Dendritic cell treated with granulocyte-macrophage colony-stimulating factor and Interleukin-4, amounts not matched to agents 40 ng/mL and 50 ng/mL, for 4 days (primary cell): ENCODE measurements at regions of chr10 and their contacts with region 1.

Region 1: DNA sequence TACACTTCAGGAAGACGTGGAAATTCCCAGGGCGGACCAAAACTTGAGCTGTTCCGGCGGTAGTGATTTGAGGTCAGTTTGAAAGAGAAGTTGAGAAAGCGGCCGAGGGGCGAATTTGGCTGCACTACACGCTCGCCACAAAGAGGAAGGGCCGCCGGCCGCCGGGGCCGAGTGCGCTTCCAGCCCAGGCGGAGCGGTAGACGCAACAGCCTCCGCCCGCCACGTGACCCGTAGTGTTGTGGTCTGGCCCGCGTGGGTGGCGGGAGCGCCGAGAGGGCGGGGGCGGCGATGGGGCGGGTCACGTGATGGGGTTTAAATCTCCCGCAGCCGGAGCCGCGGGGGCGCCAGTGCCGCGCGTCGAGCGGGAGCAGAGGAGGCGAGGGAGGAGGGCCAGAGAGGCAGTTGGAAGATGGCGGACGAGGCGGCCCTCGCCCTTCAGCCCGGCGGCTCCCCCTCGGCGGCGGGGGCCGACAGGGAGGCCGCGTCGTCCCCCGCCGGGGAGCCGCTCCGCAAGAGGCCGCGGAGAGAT is at the start of gene SIRT1:
- H3K4me3 Mint-ChIP-seq: peak within 1 kb of the TSS; percentile 92
- H3K27ac Mint-ChIP-seq: peak within 1 kb of the TSS; percentile 96
- H3K4me1 Mint-ChIP-seq: peaks cover 22% of the 10 kb centered on the region
- H3K27me3 Mint-ChIP-seq: no peaks in the 10 kb centered on the region

Region 2: DNA sequence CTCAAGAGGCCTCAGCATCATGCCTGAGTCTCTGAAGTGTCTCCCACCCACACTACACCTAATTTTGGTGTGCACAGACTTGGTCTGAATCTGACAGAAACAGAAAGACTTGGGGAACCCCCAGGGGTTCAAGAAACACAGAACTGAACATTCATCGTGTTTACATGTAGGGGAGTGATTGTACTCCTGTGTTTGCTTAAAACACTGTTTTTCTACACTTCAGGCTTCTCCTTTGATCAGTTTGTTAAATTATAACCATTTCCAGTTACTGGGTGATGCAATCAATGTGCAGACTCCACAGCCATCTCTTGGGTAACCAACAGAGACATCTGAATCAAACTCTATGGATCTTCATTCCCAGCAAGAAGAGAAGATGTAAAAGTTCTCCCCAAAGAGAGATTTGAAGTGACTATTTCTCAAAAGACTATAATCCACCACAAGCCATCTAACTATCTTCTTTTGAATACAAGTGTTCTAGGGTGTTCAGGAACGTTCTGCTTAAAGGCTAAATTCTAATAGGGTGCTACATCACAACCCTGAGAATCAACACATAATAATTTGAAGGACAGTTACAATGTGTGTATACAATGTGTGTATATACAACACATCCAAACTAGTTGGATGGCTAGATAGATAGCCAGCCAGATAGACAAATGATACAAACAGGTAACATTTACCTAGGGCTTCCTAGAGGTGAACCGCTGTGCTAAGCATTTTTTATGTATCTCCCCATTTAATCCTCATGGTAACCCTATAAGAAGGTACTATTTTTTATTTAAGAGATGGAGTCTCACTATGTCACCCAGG is 80.6 kb before region 1 on chr10:
- intact Hi-C with region 1: no loop called
- H3K4me3 Mint-ChIP-seq: no peak overlapping the region
- H3K27ac Mint-ChIP-seq: no peak overlapping the region
- H3K4me1 Mint-ChIP-seq: no peaks in the 10 kb centered on the region
- H3K27me3 Mint-ChIP-seq: no peaks in the 10 kb centered on the region

Region 3: GRCh38 chr10:67849331-67850011 is 34.9 kb before region 1 on chr10:
- intact Hi-C with region 1: loop called (anchors 2 kb)
- H3K4me3 Mint-ChIP-seq: peak overlapping the region; percentile 80
- H3K27ac Mint-ChIP-seq: peak overlapping the region; percentile 92
- H3K4me1 Mint-ChIP-seq: peaks cover 6% of the 10 kb centered on the region
- H3K27me3 Mint-ChIP-seq: no peaks in the 10 kb centered on the region

Region 4: DNA sequence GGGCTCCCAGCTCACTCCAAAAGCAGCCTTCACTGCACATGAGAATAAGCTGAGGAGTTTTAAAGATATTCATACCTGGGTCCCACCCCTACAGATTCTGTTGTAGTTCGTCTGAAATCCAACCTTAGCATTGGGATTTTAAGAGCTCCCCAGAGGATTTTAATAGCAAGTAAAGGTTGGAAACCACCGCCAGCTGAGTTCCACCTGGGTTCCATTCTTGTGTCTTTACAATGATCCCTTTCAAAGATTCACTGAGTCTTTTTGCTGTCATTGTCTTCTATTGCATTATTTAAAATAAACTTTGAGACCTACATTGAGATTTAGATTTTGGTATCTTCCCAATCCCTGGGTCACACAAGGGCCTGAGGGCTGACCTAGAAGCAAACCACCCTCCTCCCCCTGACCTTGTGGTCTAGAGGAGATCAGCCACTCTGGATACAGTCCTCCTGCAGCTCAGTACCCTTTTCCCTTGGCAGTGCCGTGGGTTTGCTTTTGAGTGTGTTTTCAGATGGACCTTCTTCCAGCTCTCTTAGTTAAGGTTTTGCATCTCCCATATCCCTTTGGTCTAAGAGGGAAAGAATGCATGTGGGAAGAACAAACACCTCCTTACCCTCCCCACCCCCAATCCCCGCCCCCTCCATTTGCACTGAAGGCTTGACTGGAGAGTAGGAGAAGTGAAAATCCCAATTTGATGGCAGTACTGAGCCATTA is 22.5 kb before region 1 on chr10:
- intact Hi-C with region 1: loop called (anchors 1 kb)
- H3K4me3 Mint-ChIP-seq: no peak overlapping the region
- H3K27ac Mint-ChIP-seq: peak overlapping the region; percentile 80
- H3K4me1 Mint-ChIP-seq: peaks cover 43% of the 10 kb centered on the region
- H3K27me3 Mint-ChIP-seq: no peaks in the 10 kb centered on the region

Region 5: GRCh38 chr10:68074775-68075549 is 190.6 kb after region 1 on chr10 and contains the start of gene HERC4:
- intact Hi-C with region 1: loop called (anchors 5 kb)
- H3K4me3 Mint-ChIP-seq: peak within 1 kb of the TSS; percentile 91
- H3K27ac Mint-ChIP-seq: peak within 1 kb of the TSS; percentile 95
- H3K4me1 Mint-ChIP-seq: peaks cover 19% of the 10 kb centered on the region
- H3K27me3 Mint-ChIP-seq: no peaks in the 10 kb centered on the region